ENCODE measurements at regions of chr15 and their contacts with region 1.

Region 1: GRCh38 chr15:57146506-57147201 is 228.2 kb downstream of the TCF12 start:
- DNase-seq: peak; percentile 65 to 85 (median 81)
- H3K4me3 ChIP-seq: peak overlapping the region in 1 of 7 experiments; percentile 44
- H3K27ac ChIP-seq: no peak overlapping the region
- H3K4me1 ChIP-seq: peaks cover 2 to 5% (median 4%) of the 10 kb centered on the region in 4 experiments
- H3K27me3 ChIP-seq: no peaks in the 10 kb centered on the region

Region 2: DNA sequence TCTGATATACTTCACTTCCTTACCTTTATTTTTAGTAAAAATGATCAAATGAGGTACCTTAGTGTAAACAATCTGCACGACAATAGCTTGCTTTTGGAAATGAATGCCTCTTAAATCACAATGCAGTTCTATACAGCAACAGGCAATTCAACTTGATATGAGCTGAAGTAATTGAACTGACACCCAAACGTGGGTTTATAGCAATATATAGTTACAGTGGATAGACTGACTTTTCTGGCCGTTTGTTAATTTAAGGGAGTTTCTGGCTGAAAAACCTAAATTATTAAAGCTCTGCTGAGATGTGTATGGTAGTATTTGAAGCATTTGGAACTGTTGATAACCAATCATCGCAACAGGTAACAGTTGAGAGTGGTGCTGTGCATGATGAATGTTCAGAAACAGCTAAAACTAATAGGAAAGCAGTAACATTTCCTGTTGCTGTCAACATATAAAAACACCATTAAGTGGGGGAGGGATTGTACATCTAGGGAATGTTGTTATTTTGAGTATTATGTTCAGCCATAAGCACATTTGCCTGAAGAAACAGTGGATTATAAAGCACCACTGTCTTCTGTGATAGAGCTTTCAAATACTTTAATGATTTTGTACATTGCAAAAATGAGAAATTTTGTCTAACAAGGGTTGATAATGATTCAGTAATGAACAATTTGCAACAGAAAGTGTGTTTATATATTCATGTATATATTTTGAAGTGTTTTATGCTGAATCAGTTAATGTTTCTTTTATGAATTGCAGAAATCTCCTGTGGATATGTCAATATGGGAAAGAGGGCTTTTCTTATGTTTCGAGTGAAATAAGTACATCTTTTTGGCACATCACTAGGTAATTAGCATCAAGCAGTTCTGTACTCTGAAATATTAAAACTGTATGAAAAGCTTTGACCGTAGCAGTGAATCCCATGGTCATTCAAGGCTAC is 52.1 kb before region 1 on chr15:
- CTCF ChIA-PET with region 1: interaction called, 10 read pairs
- POLR2A ChIA-PET with region 1: no interaction called
- DNase-seq: no peak
- H3K4me3 ChIP-seq: no peak overlapping the region
- H3K27ac ChIP-seq: no peak overlapping the region
- H3K4me1 ChIP-seq: peaks cover 0 to 14% (median 8%) of the 10 kb centered on the region in 4 experiments
- H3K27me3 ChIP-seq: no peaks in the 10 kb centered on the region

Region 3: DNA sequence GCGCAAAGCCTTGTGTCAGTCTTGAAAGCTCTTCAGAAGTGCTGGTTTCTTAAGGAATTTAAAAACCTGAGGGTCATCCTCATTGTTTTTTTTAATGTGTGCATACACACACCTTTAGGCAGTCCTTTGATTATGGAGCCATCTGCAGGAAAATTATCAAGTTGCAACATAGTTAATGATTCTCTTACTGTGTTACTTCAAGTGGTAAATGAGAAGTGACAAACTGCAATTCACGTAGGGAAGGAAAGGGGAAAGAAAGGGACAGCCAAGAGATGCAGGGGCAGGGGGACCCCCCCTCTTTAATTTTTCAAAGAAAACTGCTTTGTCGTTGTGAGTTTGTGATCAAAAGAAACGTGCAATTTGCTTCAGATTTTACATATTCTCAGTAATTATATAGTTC is 67.2 kb after region 1 on chr15:
- CTCF ChIA-PET with region 1: interaction called, 62 read pairs
- POLR2A ChIA-PET with region 1: interaction called, 3 read pairs
- DNase-seq: peak; percentile 71 to 72 (median 72)
- H3K4me3 ChIP-seq: no peak overlapping the region
- H3K27ac ChIP-seq: no peak overlapping the region
- H3K4me1 ChIP-seq: peaks cover 6 to 15% (median 9%) of the 10 kb centered on the region in 4 experiments
- H3K27me3 ChIP-seq: no peaks in the 10 kb centered on the region

Region 4: GRCh38 chr15:57306161-57306943 is 159.7 kb after region 1 on chr15:
- CTCF ChIA-PET with region 1: interaction called, 24 read pairs
- POLR2A ChIA-PET with region 1: no interaction called
- DNase-seq: peak; percentile 68 to 82 (median 80)
- H3K4me3 ChIP-seq: peak overlapping the region; percentile 29 to 83 (median 70)
- H3K27ac ChIP-seq: no peak overlapping the region
- H3K4me1 ChIP-seq: peaks cover 0 to 17% (median 11%) of the 10 kb centered on the region in 4 experiments
- H3K27me3 ChIP-seq: peaks cover 0 to 1% (median 0%) of the 10 kb centered on the region in 5 experiments

Region 5: DNA sequence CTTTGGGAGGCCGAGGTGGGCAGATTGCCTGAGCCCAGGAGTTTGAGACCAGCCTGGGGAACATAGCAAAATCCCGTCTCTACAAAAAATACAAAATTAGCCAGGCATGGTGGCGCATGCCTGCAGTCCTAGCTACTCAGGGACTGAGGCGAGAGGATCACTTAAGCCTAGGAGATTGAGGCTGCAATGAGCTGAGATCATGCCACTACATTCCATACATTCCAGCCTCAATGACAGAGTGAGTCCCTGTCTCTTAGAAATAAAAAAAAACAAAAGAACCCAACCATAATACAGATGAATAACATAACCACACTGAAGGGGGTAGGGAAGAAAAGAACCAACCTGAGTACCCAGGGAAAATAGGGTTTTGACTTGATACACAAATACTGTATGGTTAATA is 210.0 kb after region 1 on chr15:
- CTCF ChIA-PET with region 1: no interaction called
- POLR2A ChIA-PET with region 1: no interaction called
- DNase-seq: no peak
- H3K4me3 ChIP-seq: no peak overlapping the region
- H3K27ac ChIP-seq: no peak overlapping the region
- H3K4me1 ChIP-seq: no peaks in the 10 kb centered on the region
- H3K27me3 ChIP-seq: peaks cover 0 to 3% (median 0%) of the 10 kb centered on the region in 5 experiments

Region 6: GRCh38 chr15:57406062-57406772 is 259.6 kb after region 1 on chr15:
- CTCF ChIA-PET with region 1: no interaction called
- POLR2A ChIA-PET with region 1: no interaction called
- DNase-seq: no peak
- H3K4me3 ChIP-seq: no peak overlapping the region
- H3K27ac ChIP-seq: no peak overlapping the region
- H3K4me1 ChIP-seq: no peaks in the 10 kb centered on the region
- H3K27me3 ChIP-seq: no peaks in the 10 kb centered on the region

Region 7: DNA sequence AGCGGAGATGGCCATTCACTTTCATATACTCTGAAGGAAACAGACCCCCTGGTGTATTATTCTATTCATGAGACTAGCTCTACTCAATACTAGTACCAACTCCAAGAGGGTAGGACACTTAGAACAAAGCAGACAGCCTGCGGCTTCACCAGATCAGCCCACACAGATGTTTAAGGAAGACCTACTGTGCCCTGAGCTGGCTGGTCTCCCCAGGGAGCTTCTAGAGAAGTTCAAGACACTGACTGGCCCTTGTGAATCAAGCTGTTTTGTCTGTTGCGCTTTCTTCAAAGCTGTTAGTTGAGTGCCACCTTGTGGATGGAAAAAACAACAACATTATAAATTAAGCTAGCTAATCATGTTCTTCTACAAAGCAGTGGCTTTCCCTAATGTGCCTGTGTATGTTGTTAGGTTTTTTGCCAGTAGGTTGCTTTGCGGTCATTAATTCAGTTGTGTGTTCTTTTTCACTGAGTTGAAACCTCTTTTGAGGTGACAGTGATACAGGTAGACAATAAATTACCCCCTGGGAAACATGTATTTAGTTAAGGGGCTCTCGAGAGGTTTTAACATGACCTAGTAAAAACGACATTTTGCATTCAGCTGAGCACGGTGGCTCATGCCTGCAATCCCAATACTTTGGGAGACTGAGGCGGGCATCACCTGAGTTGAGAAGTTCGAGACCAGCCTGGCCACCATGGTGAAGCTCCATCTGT is 380.9 kb after region 1 on chr15:
- CTCF ChIA-PET with region 1: interaction called, 30 read pairs
- POLR2A ChIA-PET with region 1: no interaction called
- DNase-seq: peak; percentile 75 to 89 (median 88)
- H3K4me3 ChIP-seq: no peak overlapping the region
- H3K27ac ChIP-seq: no peak overlapping the region
- H3K4me1 ChIP-seq: no peaks in the 10 kb centered on the region
- H3K27me3 ChIP-seq: no peaks in the 10 kb centered on the region

Measured in common myeloid progenitor, CD34-positive (primary cell).